Activated CD4-positive, alpha-beta memory T cell treated with anti-CD3 and anti-CD28 coated beads for 36 hours (primary cell): ENCODE measurements at regions of chr5 and their contacts with region 1.

Region 1: GRCh38 chr5:177403792-177404640 is 3.6 kb upstream of the PFN3 start:
- DNase-seq: peak; percentile 91
- H3K4me3 Mint-ChIP-seq: peak overlapping the region; percentile 75
- H3K27ac Mint-ChIP-seq: no peak overlapping the region
- H3K4me1 Mint-ChIP-seq: peaks cover 22% of the 10 kb centered on the region
- H3K27me3 Mint-ChIP-seq: peaks cover 8% of the 10 kb centered on the region

Region 2: DNA sequence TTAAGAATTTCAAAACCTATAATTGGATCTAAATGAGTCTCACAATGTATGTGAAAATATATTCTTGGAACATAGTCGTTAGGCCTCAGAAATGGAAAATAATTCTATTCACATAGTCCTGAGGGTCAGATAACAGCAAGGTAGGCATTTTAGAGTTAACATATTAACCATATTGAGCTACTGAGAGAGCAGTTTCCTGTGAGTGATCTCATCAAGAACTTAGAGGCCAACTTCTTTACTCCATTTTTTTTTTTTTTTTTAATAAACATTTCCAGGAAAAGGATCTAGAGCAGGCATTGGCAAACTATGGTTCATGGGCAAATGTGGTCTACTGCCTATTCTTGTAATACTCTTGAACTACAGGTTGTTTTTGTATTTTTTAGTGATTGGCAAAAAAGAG is 127.1 kb before region 1 on chr5:
- CTCF ChIA-PET with region 1: no interaction called
- POLR2A ChIA-PET with region 1: no interaction called
- intact Hi-C with region 1: no loop called
- DNase-seq: no peak
- H3K4me3 Mint-ChIP-seq: no peak overlapping the region
- H3K27ac Mint-ChIP-seq: peak overlapping the region; percentile 78
- H3K4me1 Mint-ChIP-seq: peaks cover 7% of the 10 kb centered on the region
- H3K27me3 Mint-ChIP-seq: no peaks in the 10 kb centered on the region

Region 3: DNA sequence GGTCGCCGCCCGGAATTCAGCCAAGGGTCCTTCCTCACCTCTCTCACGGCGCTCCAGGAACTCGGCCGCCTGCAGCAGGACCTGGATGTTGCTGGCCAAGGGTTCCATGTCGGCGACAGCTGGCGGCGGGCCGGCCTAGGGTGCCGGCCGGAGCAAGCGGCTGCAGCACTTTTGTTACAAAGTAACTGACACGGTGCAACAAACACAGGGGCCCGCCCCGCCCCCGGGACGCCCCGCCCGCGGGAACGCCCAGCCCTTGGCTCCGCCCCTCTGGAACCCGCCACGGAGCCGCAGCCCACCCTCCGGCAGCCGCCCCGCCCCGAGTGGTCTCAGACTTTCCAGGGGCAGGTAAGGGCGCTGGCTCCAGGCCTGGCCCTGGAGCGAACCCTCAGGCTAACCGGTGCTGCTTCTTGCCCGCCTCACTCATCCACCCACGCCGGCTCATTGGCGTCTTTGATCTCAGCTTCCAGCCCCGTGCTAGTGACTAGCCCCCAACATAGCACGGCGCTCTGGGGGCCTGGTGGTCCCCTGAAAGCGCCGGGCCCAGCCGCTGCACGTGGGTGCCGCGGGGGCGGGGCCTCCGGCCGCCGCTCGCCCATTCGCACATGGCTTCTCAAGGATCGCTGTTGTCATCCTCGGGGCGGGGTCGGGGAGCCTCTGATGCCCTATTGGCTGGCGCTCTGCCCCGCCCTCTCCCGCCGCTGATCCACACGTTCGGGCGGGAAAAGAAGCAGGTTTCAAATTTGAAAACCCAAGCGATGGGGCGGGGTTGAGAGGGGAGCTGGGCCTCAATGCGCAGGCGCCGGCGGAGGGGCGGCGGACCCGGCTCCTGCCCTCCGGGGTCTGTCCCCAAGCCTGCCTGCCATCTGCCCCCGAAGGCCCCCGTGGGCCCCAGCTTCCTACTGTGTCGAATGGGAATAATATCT is 92.0 kb before region 1 on chr5 and contains the start of gene MXD3:
- CTCF ChIA-PET with region 1: interaction called, 52 read pairs
- POLR2A ChIA-PET with region 1: interaction called, 3 read pairs
- intact Hi-C with region 1: loop called (anchors 2 kb)
- DNase-seq: peak; percentile 98
- H3K4me3 Mint-ChIP-seq: peak within 1 kb of the TSS; percentile 78
- H3K27ac Mint-ChIP-seq: peak within 1 kb of the TSS; percentile 88
- H3K4me1 Mint-ChIP-seq: peaks cover 22% of the 10 kb centered on the region
- H3K27me3 Mint-ChIP-seq: peaks cover 1% of the 10 kb centered on the region
- total RNA-seq, gene MXD3: 31.2 to 33.4 TPM

Region 4: DNA sequence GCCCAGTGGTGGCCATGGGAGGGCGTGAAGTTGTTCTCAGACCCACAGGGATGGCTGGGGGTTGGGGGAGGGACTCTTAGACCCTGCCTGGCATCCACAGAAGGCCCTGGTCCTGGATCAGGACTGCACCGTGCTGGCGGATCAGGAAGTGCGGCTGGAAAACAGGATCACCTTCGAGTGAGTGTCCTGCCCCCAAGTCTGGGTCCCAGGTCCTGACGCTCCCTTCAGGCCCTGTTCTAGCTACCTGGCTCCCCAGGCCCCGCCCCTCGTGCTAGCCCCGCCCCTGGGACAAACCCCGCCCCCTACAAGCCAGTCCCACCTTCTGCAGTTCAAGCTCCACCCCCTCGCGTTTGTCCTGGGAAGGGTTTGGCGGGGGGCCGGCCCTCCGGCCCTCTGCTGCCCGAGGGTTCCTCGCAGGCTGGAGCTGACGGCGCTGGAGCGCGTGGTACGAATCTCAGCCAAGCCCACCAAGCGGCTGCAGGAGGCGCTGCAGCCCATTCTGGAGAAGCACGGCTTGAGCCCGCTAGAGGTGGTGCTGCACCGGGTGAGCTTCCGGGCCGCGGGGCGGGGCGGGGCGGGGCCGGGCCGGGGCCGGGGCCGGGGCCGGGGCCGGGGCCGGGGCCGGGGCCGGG is 33.4 kb before region 1 on chr5:
- CTCF ChIA-PET with region 1: interaction called, 64 read pairs
- POLR2A ChIA-PET with region 1: interaction called, 4 read pairs
- intact Hi-C with region 1: no loop called
- DNase-seq: peak; percentile 79
- H3K4me3 Mint-ChIP-seq: peak overlapping the region; percentile 74
- H3K27ac Mint-ChIP-seq: peak overlapping the region; percentile 38
- H3K4me1 Mint-ChIP-seq: peaks cover 65% of the 10 kb centered on the region
- H3K27me3 Mint-ChIP-seq: no peaks in the 10 kb centered on the region

Region 5: GRCh38 chr5:177419051-177419450 is 15.0 kb after region 1 on chr5:
- CTCF ChIA-PET with region 1: interaction called, 220 read pairs
- POLR2A ChIA-PET with region 1: interaction called, 6 read pairs
- intact Hi-C with region 1: no loop called
- DNase-seq: no peak
- H3K4me3 Mint-ChIP-seq: no peak overlapping the region
- H3K27ac Mint-ChIP-seq: no peak overlapping the region
- H3K4me1 Mint-ChIP-seq: peaks cover 16% of the 10 kb centered on the region
- H3K27me3 Mint-ChIP-seq: no peaks in the 10 kb centered on the region

Region 6: DNA sequence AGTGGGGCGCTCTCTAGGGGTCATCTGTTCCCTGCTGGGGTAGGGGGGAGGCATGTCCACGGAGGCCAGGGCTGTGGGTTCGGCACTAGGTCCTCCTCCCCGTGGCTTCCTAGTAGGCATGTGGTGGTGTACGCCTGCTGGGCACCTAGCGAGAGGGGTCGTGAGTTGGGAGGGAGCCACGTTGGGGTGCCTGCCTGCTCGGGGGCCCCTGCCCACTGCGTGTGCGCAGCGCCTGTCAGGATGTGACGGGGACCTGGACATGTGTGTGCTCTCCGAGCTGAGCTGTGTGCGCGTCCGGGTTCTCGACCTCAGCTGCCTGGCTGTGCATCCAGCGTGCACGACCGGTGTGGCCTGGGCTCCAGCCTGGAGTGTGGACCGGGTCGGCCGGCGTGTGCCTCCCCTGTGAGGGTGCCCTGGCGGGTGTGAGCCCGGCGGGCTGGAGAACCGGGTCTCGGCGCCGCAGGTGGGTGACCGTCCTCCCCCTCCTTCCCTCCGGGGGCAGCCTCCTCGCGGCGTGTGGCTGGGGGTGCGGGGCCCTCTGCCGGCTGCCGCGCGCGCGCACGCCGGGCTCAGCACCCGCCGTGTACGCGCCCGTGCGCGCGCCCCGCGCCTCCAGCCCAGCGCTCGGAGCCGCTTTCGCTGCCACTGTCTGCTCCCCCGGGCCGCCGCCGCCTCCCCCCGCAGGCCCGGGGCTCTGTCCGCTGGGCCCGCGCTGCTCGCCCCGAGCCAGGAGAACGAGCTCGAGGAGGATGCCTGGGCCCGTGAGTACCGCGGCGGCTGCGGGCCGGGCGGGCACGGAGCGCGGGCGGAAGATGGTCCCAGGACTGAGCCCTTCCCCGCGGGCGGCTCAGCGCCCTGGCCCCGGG is 42.4 kb after region 1 on chr5 and contains the start of gene PRR7:
- CTCF ChIA-PET with region 1: interaction called, 624 read pairs
- POLR2A ChIA-PET with region 1: interaction called, 81 read pairs
- intact Hi-C with region 1: no loop called
- DNase-seq: peak; percentile 77
- H3K4me3 Mint-ChIP-seq: peak within 1 kb of the TSS; percentile 67
- H3K27ac Mint-ChIP-seq: peak within 1 kb of the TSS; percentile 81
- H3K4me1 Mint-ChIP-seq: peaks cover 48% of the 10 kb centered on the region
- H3K27me3 Mint-ChIP-seq: no peaks in the 10 kb centered on the region
- total RNA-seq, gene PRR7: 13.3 to 13.6 TPM

Region 7: DNA sequence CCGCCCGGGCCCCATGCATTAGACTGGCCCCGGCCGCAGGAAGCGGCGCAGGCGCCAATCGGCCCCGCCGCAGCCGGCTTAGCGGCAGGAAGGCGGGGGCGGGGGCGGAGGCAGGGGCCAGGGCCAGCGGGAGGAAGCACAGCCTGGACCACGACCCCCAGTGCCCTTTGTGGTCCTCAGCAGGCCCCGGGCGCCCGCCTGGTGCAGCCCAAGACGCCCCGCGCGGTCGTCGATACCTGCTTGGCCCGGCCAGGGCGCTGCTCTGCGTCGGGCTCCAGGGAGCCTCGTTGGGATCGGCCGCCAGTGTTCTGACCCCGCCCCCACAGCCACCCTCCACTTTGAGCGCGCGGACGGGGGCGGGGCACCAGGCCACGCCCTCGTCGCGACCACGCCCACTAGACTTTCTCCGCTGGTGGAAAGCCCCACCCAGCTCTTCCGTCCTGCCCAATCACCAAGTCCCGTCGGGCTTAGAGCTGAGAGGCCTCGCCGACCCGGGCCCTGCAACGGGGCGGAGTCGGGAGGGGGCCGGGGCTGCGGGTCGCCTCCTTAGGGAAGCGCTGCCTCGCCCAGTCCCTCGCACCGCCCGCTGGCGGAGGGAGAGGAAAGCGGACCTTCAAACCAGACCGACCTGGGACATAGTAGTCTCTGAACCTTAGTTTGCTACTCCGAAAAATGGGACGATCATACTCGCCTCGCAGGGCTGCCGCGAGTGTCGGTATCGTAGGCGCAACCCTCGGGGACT is 93.4 kb after region 1 on chr5 and contains the start of gene PDLIM7:
- CTCF ChIA-PET with region 1: interaction called, 67 read pairs
- POLR2A ChIA-PET with region 1: interaction called, 4 read pairs
- intact Hi-C with region 1: no loop called
- DNase-seq: peak; percentile 96
- H3K4me3 Mint-ChIP-seq: peak within 1 kb of the TSS; percentile 82
- H3K27ac Mint-ChIP-seq: peak within 1 kb of the TSS; percentile 23
- H3K4me1 Mint-ChIP-seq: peaks cover 27% of the 10 kb centered on the region
- H3K27me3 Mint-ChIP-seq: peaks cover 8% of the 10 kb centered on the region
- total RNA-seq, gene PDLIM7: 50.2 to 56.6 TPM